Calu3 (cell line): ENCODE measurements at regions of chr11 and their contacts with region 1.

Region 1: DNA sequence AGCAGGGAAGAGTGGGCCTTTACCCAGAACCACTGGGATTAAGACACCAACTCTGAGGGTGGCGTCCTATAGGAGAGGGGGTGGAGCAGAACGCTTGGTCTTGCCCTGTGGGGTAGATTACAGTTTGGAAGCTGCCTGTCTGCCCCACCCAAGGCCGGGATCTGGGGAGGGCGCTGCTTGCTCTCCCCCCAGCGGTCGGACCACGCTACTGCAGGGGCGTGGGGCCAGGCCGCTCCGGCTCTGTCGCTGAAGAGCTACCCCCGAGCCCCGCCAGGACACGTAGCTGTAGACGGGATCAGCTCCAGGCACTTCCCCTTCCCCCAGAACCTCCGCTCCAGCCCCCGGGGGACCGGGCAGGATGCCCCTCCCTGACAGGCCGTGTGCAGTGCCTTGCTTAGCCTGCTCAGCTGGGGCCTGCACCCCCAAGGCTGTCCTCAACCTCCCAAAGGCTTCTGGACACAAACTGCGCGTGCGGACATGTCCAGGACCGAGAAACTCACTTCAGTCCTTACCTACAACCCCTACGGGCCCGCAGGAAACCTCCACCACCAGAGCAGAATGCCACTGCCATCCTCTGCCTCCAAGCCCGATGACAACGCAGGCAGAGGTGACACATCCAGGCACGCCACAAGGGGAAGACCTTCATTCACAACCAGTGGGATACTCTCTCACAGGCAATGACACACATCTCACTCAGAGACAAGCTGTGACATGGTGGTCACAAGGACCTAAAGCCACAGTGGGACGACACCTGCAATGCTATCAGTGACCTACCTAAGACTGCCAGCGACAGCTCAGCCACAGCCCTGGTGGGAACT is 3.6 kb downstream of the AHNAK start:
- DNase-seq: peak; percentile 91
- H3K4me3 Mint-ChIP-seq: peak overlapping the region; percentile 100
- H3K27ac Mint-ChIP-seq: peak overlapping the region; percentile 97
- H3K4me1 Mint-ChIP-seq: peaks cover 51% of the 10 kb centered on the region
- H3K27me3 Mint-ChIP-seq: no peaks in the 10 kb centered on the region
- CTCF ChIP-seq: peak; percentile 97

Region 2: DNA sequence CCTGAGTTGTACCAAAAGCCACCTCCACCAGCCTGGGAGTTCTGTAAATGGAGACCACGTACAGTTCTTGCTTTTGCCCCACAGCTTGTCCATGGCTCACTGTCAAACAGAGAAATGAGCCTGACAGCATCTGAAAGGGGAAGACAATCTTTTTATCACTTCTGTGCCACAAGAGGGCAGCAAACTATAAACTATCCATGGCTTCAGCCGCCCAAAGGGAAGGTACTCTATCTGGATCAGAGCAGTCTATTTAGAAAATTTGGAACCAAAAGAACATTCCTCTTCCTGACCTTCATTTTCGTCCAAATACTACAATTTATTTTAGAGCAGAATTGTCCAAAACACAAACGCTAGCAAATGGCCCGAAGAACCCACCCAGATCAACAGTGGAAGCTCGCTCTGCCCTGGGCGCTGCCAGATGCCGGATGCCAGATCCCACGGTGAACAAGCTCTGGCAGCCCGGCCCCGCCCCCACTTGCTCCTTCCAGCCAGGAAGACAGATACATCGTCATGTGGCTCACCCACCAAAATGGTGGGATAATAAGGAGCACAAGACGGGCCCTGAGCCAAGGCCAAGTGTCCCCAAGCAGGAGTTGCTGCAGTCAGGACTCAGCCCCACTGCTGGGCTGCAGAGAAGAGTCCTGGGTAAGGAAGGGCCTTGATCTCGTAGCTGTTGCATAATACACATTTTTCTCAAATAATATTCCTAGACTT is 148.0 kb before region 1 on chr11:
- CTCF ChIA-PET with region 1: interaction called, 20 read pairs
- intact Hi-C with region 1: loop called (anchors 5 kb)
- DNase-seq: peak; percentile 51
- H3K4me3 Mint-ChIP-seq: no peak overlapping the region
- H3K27ac Mint-ChIP-seq: no peak overlapping the region
- H3K4me1 Mint-ChIP-seq: no peaks in the 10 kb centered on the region
- H3K27me3 Mint-ChIP-seq: no peaks in the 10 kb centered on the region
- CTCF ChIP-seq: peak; percentile 70

Region 3: DNA sequence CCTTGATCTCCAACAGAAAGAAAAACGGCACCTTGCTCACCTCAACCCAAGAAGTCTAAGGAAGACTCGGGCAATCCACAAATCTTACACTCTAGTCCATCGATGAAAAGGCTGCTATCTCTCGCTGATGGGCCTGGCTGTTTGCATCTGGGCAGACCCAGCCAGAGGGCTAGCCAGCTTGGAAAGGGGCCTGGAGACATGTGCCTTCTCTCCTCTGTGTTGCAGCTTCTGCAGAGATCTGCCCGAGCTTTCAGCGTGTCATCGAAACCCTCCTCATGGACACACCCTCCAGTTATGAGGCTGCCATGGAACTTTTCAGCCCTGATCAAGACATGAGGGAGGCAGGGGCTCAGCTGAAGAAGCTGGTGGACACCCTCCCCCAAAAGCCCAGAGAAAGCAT is 121.0 kb before region 1 on chr11:
- CTCF ChIA-PET with region 1: interaction called, 69 read pairs
- intact Hi-C with region 1: loop called (anchors 2 kb)
- DNase-seq: no peak
- H3K4me3 Mint-ChIP-seq: no peak overlapping the region
- H3K27ac Mint-ChIP-seq: no peak overlapping the region
- H3K4me1 Mint-ChIP-seq: peaks cover 12% of the 10 kb centered on the region
- H3K27me3 Mint-ChIP-seq: peaks cover 30% of the 10 kb centered on the region
- CTCF ChIP-seq: no peak

Region 4: GRCh38 chr11:62427630-62428233 is 115.2 kb before region 1 on chr11:
- CTCF ChIA-PET with region 1: interaction called, 69 read pairs
- intact Hi-C with region 1: loop called (anchors 2 kb)
- DNase-seq: no peak
- H3K4me3 Mint-ChIP-seq: no peak overlapping the region
- H3K27ac Mint-ChIP-seq: no peak overlapping the region
- H3K4me1 Mint-ChIP-seq: peaks cover 41% of the 10 kb centered on the region
- H3K27me3 Mint-ChIP-seq: peaks cover 24% of the 10 kb centered on the region
- CTCF ChIP-seq: no peak

Region 5: GRCh38 chr11:62497132-62497915 is 45.6 kb before region 1 on chr11:
- CTCF ChIA-PET with region 1: interaction called, 16 read pairs
- intact Hi-C with region 1: loop called (anchors 2 kb)
- DNase-seq: peak; percentile 62
- H3K4me3 Mint-ChIP-seq: no peak overlapping the region
- H3K27ac Mint-ChIP-seq: peak overlapping the region; percentile 35
- H3K4me1 Mint-ChIP-seq: peaks cover 32% of the 10 kb centered on the region
- H3K27me3 Mint-ChIP-seq: no peaks in the 10 kb centered on the region
- CTCF ChIP-seq: peak; percentile 69